Activated CD4-positive, alpha-beta memory T cell treated with anti-CD3 and anti-CD28 coated beads for 36 hours (primary cell): ENCODE measurements at regions of chr17 and their contacts with region 1.

Region 1: DNA sequence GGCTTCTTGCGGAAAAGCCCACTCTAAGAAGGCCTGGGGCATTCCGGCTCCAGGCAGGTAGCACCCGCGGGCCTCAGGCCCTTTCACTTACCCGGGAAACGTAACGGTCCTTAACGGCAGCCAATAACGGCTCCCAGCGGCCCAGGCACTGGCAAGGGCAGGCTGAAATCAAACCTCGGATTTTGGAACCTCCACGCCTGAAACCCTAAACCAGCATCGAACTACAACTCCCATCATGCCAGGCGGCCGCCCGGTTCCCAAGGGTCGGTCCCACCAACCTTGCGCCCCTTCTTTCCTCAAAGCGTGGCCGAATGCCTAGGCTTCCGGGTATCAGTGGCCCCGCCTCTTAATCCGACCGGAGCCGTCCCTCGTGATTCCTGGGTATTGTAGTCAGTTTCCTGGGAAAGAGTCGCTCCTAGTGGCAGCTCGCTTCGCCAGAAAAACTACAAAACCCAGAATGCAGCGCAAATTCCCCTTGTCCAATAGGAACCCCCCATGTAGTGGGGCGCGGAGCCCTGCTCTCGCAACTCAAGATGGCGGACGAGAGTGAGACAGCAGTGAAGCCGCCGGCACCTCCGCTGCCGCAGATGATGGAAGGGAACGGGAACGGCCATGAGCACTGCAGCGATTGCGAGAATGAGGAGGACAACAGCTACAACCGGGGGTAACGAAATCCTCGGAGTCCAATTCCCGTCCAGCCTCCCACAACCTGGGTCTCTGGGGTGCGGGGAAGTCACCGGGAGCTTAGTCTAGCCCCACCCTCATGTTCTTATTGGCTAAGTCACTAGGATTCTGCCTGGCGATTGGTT is at the start of gene NMT1:
- DNase-seq: peak; percentile 98
- H3K4me3 Mint-ChIP-seq: peak within 1 kb of the TSS; percentile 100
- H3K27ac Mint-ChIP-seq: peak within 1 kb of the TSS; percentile 100
- H3K4me1 Mint-ChIP-seq: peaks cover 48% of the 10 kb centered on the region
- H3K27me3 Mint-ChIP-seq: no peaks in the 10 kb centered on the region
- total RNA-seq, gene NMT1: 158 TPM

Region 2: GRCh38 chr17:44970136-44970737 is 90.8 kb before region 1 on chr17:
- CTCF ChIA-PET with region 1: interaction called, 3 read pairs
- POLR2A ChIA-PET with region 1: interaction called, 3 read pairs
- intact Hi-C with region 1: loop called (anchors 1 kb)
- DNase-seq: peak; percentile 49
- H3K4me3 Mint-ChIP-seq: peak overlapping the region; percentile 26
- H3K27ac Mint-ChIP-seq: no peak overlapping the region
- H3K4me1 Mint-ChIP-seq: peaks cover 37% of the 10 kb centered on the region
- H3K27me3 Mint-ChIP-seq: peaks cover 46% of the 10 kb centered on the region

Region 3: GRCh38 chr17:45031231-45032173 is 29.5 kb before region 1 on chr17:
- CTCF ChIA-PET with region 1: no interaction called
- POLR2A ChIA-PET with region 1: no interaction called
- intact Hi-C with region 1: no loop called
- DNase-seq: no peak
- H3K4me3 Mint-ChIP-seq: no peak overlapping the region
- H3K27ac Mint-ChIP-seq: no peak overlapping the region
- H3K4me1 Mint-ChIP-seq: no peaks in the 10 kb centered on the region
- H3K27me3 Mint-ChIP-seq: no peaks in the 10 kb centered on the region

Region 4: GRCh38 chr17:45228763-45229539 is 167.9 kb after region 1 on chr17:
- CTCF ChIA-PET with region 1: no interaction called
- POLR2A ChIA-PET with region 1: no interaction called
- intact Hi-C with region 1: loop called (anchors 5 kb)
- DNase-seq: peak; percentile 96
- H3K4me3 Mint-ChIP-seq: peak overlapping the region; percentile 100
- H3K27ac Mint-ChIP-seq: peak overlapping the region; percentile 100
- H3K4me1 Mint-ChIP-seq: peaks cover 86% of the 10 kb centered on the region
- H3K27me3 Mint-ChIP-seq: no peaks in the 10 kb centered on the region